Left cardiac atrium (tissue), 4 donors: ENCODE measurements at regions of chr2 and their contacts with region 1.

Region 1: GRCh38 chr2:190534310-190535120 is at the start of gene NEMP2:
- DNase-seq: peak; percentile 87
- ATAC-seq: peak; percentile 86 to 94
- total RNA-seq, gene NEMP2: 4.5 to 5.0 TPM

Region 2: DNA sequence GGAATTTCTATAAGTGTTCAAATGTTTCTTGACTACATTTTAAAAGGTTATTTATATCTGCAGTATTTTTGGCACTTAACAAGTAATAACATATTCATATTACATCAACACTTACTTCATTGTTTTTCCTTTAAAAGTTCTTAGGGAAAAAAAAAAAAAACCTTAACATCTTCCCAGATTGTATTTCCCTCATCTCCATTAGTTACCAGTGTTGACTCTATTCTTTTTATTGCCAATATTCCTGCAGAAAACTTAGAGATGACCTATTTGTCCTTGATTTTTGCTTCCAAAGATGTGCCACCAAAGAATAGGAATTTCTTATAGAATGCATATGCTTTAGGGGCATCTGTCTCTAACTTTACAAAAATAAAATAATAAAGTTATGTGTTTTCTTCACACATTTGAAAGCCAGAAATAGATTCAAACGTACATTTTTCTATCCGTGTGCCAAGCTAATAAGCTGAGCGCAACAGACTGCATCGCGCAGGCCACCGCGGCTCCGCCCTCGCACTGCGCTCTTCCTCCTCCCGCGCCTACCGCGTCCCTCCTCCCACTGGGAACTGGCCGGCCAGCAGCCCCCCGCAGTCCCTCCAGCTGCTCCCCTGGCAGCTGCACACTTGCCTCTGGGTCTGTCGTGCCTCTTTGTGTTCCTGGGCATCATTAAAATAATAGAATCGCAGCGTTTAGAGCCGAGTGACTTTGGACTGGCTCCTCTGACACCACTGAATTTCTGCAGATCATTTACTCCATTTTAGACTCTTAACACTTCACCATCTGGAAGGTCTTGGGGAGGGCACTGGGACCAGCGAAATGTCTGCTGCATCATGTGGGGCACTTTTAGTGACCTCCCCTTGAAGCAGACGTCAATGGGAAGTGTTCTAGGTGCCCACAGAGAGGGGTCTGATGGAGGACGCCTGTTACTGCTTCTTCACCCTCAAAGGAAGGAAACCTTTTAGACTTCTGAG is 93.2 kb after region 1 on chr2:
- intact Hi-C with region 1: loop called in 1 of 2 experiments (anchors 10 kb)
- DNase-seq: peak; percentile 53
- ATAC-seq: peak; percentile 93

Region 3: DNA sequence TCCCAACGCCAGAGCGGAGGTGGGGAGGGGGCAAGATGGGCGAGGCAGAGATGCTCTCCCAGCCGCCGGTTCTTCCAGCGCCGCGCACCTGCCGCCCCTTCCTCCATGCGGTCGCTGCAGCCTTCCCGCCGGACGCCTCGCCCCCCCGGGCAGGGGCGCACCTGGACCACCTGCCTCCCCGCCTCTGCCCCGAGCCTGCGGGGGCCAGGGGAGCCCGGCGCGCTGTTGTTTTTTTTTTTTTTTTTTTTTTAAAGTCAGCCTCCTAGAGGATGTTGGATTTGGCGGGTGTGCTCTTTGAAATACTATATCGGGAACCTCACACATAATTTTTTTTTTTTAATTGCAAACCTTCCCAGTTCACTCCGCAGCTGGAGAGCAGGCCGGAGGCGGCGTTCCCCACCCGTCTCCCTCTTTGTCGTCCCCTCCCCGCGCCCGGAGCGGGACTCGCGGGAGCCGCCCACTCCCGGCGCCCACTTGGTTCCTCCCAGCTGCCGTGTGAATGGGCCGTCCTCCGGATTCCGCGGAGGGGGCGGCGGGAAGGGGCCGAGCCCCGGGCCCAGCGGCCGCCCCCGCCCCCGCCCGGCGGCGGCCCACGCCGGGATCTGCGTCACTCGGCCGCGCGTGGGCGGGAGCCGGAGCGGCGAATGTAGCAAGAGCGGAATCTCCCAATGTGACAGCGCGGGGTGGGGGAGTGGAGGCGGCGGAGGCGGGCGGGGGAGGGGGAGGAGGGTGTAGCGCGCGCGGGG is 113.9 kb after region 1 on chr2:
- intact Hi-C with region 1: loop called (anchors 5 to 10 kb)
- DNase-seq: peak; percentile 95
- ATAC-seq: peak; percentile 93 to 94